CD4-positive, alpha-beta memory T cell (primary cell): ENCODE measurements at regions of chr22 and their contacts with region 1.

Region 1: DNA sequence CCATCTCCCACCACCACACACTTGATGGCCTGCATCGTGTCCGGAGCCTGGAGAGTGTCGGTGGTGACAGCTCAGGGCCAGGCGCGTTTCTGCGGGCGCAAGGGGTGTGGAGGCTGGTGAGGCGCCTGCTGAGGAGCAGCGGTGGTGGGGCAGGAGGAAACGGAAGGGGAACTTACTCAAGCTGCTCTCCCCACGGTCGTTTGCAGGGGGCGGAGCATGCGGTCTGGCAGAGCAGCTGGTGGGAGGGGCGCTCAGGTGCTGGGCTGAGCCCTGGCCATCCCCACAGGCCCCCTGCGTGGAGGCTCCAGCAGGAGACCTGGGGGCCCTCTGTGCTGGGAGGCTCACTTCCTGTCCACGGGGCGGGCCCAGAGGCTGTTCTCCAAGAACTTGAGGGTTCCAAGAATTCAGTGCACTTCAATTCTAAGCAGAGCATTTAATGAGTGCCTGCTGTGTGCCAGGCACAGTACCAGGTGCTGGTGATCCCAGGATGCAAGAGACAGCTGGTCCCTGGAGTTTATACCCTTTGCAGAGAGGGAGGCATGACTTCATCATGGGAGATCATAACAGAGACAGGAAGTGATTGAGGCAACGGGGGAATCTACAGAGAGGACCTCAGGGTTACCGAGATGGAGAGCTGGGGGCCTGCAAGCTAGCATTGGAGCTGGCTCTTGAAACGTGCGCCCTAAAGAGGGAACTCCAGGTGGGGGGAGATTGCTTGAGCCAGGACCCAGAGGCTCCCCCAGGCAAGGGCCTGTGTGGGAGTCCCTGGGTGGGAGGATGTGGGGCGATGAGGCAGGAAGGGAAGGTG is at the start of gene RAC2:
- DNase-seq: peak; percentile 77 to 94 (median 79)
- H3K4me3 ChIP-seq: peak within 1 kb of the TSS; percentile 89 to 99
- H3K4me3 Mint-ChIP-seq: peak within 1 kb of the TSS; percentile 91 to 99 (median 96)
- H3K27ac ChIP-seq: peak within 1 kb of the TSS; percentile 91
- H3K27ac Mint-ChIP-seq: peak within 1 kb of the TSS; percentile 87 to 98 (median 97)
- H3K4me1 ChIP-seq: peaks cover 45% of the 10 kb centered on the region
- H3K4me1 Mint-ChIP-seq: peaks cover 31 to 57% (median 42%) of the 10 kb centered on the region in 4 donors
- H3K27me3 ChIP-seq: no peaks in the 10 kb centered on the region
- H3K27me3 Mint-ChIP-seq: no peaks in the 10 kb centered on the region
- total RNA-seq, gene RAC2: 304 to 318 TPM

Region 2: DNA sequence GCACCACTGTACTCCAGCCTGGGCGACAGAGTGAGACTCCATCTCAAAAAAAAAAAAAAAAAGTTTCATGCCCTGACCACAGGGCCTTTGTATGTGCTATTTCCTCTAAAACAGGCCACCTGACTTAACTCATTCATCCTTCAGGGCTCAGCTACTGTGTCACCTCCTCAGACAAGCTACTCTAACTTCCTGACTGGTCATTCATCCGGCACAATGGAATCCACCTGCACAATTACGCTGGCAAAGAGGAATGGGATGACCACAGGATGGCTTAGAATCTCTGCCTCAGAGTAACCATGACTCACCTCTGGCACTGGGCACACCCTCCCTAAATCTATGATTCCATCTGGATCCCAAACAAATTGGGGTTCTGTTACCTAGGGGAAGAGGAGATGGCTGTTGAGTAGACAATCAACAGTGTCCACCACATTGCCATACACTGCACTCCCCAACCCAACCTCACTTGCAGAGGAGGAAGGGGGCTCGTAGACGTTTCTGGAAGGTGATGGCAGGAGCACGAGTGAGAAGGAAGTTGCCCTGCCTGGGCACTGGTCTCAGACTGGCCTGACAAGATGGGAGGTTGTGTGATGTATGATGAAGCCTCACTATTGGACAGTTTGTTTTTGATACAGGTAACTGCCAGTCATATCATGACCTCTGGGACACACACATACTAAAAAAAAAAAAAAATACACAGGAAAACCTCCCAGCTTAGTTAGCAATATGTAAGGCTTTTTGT is 1886.3 kb before region 1 on chr22:
- CTCF ChIA-PET with region 1: no interaction called
- POLR2A ChIA-PET with region 1: no interaction called
- intact Hi-C with region 1: no loop called
- DNase-seq: no peak
- H3K4me3 ChIP-seq: no peak overlapping the region
- H3K4me3 Mint-ChIP-seq: no peak overlapping the region
- H3K27ac ChIP-seq: no peak overlapping the region
- H3K27ac Mint-ChIP-seq: peak overlapping the region in 1 of 7 donors; percentile 13
- H3K4me1 ChIP-seq: peaks cover under 1% of the 10 kb centered on the region
- H3K4me1 Mint-ChIP-seq: peaks cover 0 to 2% (median 0%) of the 10 kb centered on the region in 4 donors
- H3K27me3 ChIP-seq: no peaks in the 10 kb centered on the region
- H3K27me3 Mint-ChIP-seq: peaks cover 0 to 13% of the 10 kb centered on the region in 2 donors

Region 3: DNA sequence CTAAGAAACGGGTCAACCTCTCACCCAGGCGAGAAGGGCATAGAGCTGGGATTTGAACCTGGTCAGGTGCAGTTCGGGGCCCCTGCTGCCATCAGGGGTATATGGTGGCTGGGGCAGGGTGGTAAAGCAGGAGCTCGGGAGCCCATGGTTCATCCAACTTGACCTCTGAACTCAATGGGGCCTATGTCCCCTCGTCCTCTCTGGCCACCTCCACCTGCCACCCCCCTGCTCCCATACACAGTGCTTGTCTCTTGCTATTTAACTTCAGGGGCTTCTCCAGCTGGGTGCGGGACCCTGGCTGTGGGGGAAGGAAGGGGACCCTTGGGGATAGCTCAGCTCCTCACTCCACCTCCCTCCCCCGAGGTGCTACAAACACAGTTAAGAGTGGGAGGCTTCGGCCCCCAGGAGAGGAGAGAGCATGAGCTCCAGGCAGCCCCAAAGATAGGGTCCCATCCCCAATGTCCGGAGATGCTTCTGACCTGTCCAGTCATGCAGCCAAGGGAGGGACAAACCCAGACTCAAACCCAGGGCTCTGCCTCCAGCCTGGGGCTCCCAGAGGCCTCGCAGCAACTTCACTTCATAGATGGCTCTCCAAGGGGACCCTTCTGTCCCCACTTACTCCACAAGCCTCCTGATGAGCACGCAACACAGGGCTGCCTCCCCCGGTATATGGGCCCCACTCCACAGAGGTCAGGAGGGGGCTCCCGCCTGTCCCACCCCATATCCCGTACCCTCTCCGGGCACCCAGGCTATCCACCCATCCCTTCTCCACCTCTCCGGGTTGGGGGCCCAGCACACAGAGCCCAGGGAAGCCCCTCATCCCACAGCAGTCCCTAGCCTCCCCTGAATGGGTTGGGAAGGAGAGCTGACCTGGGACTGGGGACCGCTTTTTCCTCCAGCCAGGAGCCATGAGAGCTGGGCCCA is 95.3 kb before region 1 on chr22:
- CTCF ChIA-PET with region 1: no interaction called
- POLR2A ChIA-PET with region 1: interaction called, 50 read pairs
- intact Hi-C with region 1: no loop called
- DNase-seq: peak in 1 of 5 donors; percentile 44
- H3K4me3 ChIP-seq: peak overlapping the region; percentile 72
- H3K4me3 Mint-ChIP-seq: peak overlapping the region; percentile 88 to 96 (median 92)
- H3K27ac ChIP-seq: peak overlapping the region; percentile 95
- H3K27ac Mint-ChIP-seq: peak overlapping the region; percentile 96 to 100 (median 98)
- H3K4me1 ChIP-seq: peaks cover 63% of the 10 kb centered on the region
- H3K4me1 Mint-ChIP-seq: peaks cover 43 to 74% (median 58%) of the 10 kb centered on the region in 4 donors
- H3K27me3 ChIP-seq: no peaks in the 10 kb centered on the region
- H3K27me3 Mint-ChIP-seq: peaks cover 0 to 4% of the 10 kb centered on the region in 2 donors

Region 4: GRCh38 chr22:37193629-37194191 is 50.6 kb before region 1 on chr22:
- CTCF ChIA-PET with region 1: interaction called, 106 read pairs
- POLR2A ChIA-PET with region 1: interaction called, 129 read pairs
- intact Hi-C with region 1: no loop called
- DNase-seq: peak; percentile 41 to 63 (median 45)
- H3K4me3 ChIP-seq: no peak overlapping the region
- H3K4me3 Mint-ChIP-seq: peak overlapping the region; percentile 49 to 82 (median 60)
- H3K27ac ChIP-seq: peak overlapping the region; percentile 17
- H3K27ac Mint-ChIP-seq: peak overlapping the region; percentile 68 to 95 (median 90)
- H3K4me1 ChIP-seq: peaks cover 51% of the 10 kb centered on the region
- H3K4me1 Mint-ChIP-seq: peaks cover 18 to 55% (median 33%) of the 10 kb centered on the region in 4 donors
- H3K27me3 ChIP-seq: no peaks in the 10 kb centered on the region
- H3K27me3 Mint-ChIP-seq: no peaks in the 10 kb centered on the region

Region 5: DNA sequence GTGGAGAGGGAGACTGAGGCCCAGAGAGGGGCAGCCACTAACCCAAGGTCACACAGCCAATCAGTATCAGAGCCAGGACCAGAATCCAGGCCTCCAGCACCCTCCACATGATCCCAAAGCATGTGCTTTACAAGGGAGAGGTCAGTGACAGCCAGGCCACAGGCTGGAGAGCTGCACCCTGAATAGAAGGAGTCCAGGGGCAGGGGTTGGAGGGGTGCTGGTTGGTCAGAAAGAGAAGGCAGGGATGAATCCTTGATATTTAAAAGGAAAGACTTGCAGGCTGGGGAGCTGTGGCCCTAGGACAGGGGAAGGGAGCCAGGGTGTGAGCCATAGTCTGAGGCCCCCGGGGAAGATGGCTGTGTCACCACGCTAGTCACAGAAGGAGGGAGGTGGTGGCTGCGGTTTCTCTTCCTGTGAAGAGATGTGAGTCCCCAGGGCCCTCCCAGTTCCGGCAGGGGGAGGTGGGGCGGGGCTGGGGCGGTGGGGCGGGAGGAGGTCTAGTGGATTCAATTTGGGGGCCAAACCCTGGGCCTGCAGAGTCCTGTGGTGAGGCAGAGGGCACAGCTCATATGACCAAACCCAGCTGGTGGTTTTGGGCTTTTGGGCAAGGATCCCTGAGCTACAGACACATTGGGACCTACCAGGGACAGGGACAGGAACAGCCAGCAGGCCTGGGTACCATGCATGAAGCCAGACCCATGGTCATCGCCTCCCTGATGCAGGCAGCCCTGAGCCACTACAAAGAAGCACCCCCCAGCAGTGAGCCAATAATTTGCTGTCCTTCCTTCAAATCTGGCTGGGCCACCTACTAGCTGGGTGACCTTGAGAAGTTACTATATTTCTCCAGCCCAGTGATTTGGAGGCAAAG is 14.3 kb before region 1 on chr22:
- CTCF ChIA-PET with region 1: interaction called, 87 read pairs
- POLR2A ChIA-PET with region 1: interaction called, 646 read pairs
- intact Hi-C with region 1: loop called (anchors 1 kb)
- DNase-seq: peak; percentile 87 to 97 (median 88)
- H3K4me3 ChIP-seq: peak overlapping the region; percentile 48 to 51
- H3K4me3 Mint-ChIP-seq: peak overlapping the region; percentile 75 to 88 (median 82)
- H3K27ac ChIP-seq: peak overlapping the region; percentile 97
- H3K27ac Mint-ChIP-seq: peak overlapping the region; percentile 87 to 100 (median 100)
- H3K4me1 ChIP-seq: peaks cover 96% of the 10 kb centered on the region
- H3K4me1 Mint-ChIP-seq: peaks cover 67 to 92% (median 83%) of the 10 kb centered on the region in 4 donors
- H3K27me3 ChIP-seq: no peaks in the 10 kb centered on the region
- H3K27me3 Mint-ChIP-seq: no peaks in the 10 kb centered on the region

Region 6: GRCh38 chr22:37282385-37282677 is 38.0 kb after region 1 on chr22 and contains the start of gene CYTH4:
- CTCF ChIA-PET with region 1: interaction called, 5 read pairs
- POLR2A ChIA-PET with region 1: interaction called, 26 read pairs
- intact Hi-C with region 1: no loop called
- DNase-seq: peak; percentile 52 to 87 (median 65)
- H3K4me3 ChIP-seq: peak within 1 kb of the TSS; percentile 98 to 99
- H3K4me3 Mint-ChIP-seq: peak within 1 kb of the TSS; percentile 89 to 100 (median 94)
- H3K27ac ChIP-seq: peak within 1 kb of the TSS; percentile 81
- H3K27ac Mint-ChIP-seq: peak within 1 kb of the TSS; percentile 83 to 99 (median 96)
- H3K4me1 ChIP-seq: peaks cover 46% of the 10 kb centered on the region
- H3K4me1 Mint-ChIP-seq: peaks cover 33 to 56% (median 44%) of the 10 kb centered on the region in 4 donors
- H3K27me3 ChIP-seq: no peaks in the 10 kb centered on the region
- H3K27me3 Mint-ChIP-seq: no peaks in the 10 kb centered on the region
- total RNA-seq, gene CYTH4: 169 to 177 TPM

Region 7: GRCh38 chr22:37486224-37486845 is 242.0 kb after region 1 on chr22 and contains the start of gene MFNG:
- CTCF ChIA-PET with region 1: no interaction called
- POLR2A ChIA-PET with region 1: interaction called, 44 read pairs
- intact Hi-C with region 1: no loop called
- DNase-seq: peak; percentile 61 to 84 (median 64)
- H3K4me3 ChIP-seq: peak within 1 kb of the TSS; percentile 85 to 87
- H3K4me3 Mint-ChIP-seq: peak within 1 kb of the TSS; percentile 89 to 98 (median 96)
- H3K27ac ChIP-seq: peak within 1 kb of the TSS; percentile 85
- H3K27ac Mint-ChIP-seq: peak within 1 kb of the TSS; percentile 94 to 98 (median 97)
- H3K4me1 ChIP-seq: peaks cover 63% of the 10 kb centered on the region
- H3K4me1 Mint-ChIP-seq: peaks cover 39 to 87% (median 57%) of the 10 kb centered on the region in 4 donors
- H3K27me3 ChIP-seq: no peaks in the 10 kb centered on the region
- H3K27me3 Mint-ChIP-seq: no peaks in the 10 kb centered on the region
- total RNA-seq, gene MFNG: 213 to 218 TPM

Region 8: GRCh38 chr22:37498289-37498909 is 254.1 kb after region 1 on chr22:
- CTCF ChIA-PET with region 1: no interaction called
- POLR2A ChIA-PET with region 1: no interaction called
- intact Hi-C with region 1: no loop called
- DNase-seq: peak; percentile 68 to 72 (median 70)
- H3K4me3 ChIP-seq: no peak overlapping the region
- H3K4me3 Mint-ChIP-seq: no peak overlapping the region
- H3K27ac ChIP-seq: no peak overlapping the region
- H3K27ac Mint-ChIP-seq: no peak overlapping the region
- H3K4me1 ChIP-seq: peaks cover 19% of the 10 kb centered on the region
- H3K4me1 Mint-ChIP-seq: peaks cover 8 to 25% (median 16%) of the 10 kb centered on the region in 4 donors
- H3K27me3 ChIP-seq: peaks cover 3% of the 10 kb centered on the region
- H3K27me3 Mint-ChIP-seq: no peaks in the 10 kb centered on the region

Region 9: DNA sequence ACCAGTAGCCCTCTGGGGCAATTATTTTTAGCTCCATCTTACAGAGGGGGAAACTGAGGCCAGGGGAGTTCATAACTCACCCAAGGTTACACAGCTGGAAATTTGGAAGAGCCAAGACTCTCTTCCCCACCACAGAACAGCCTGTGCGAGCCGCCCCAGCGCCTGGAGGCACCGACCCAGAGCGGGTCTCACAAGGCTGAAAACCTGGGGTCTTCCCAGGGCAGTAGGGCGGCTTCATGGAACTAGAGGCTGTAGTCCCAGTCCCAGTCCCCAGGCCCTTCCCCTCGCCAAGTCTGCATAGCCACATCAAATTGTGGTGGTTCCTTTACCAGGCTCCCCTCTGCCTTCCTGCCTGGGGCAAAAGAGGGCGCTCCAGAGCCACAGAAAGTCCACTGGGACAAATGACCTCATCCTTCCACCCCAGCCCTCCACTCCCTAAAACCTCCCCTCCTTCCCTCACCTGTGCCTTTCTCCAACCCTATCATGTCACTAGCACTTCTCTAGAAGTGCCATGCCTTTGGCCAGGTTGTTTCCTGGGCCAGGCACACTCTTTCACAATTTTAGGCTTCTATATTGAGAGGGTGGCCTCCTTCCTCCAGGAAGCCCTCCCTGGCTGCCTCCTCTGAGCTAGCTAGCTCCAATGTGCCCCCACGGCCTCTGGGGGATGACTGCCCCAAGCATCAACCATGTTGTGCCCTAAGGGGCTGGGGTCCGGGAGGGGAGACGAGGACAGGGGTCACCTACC is 300.8 kb after region 1 on chr22:
- CTCF ChIA-PET with region 1: no interaction called
- POLR2A ChIA-PET with region 1: no interaction called
- intact Hi-C with region 1: no loop called
- DNase-seq: peak; percentile 19 to 51 (median 28)
- H3K4me3 ChIP-seq: no peak overlapping the region
- H3K4me3 Mint-ChIP-seq: no peak overlapping the region
- H3K27ac ChIP-seq: no peak overlapping the region
- H3K27ac Mint-ChIP-seq: peak overlapping the region in 2 of 7 donors; percentile 8 to 59
- H3K4me1 ChIP-seq: peaks cover 18% of the 10 kb centered on the region
- H3K4me1 Mint-ChIP-seq: peaks cover 11 to 29% (median 18%) of the 10 kb centered on the region in 4 donors
- H3K27me3 ChIP-seq: no peaks in the 10 kb centered on the region
- H3K27me3 Mint-ChIP-seq: peaks cover 11 to 19% of the 10 kb centered on the region in 2 donors